IMR-90 (cell line): ENCODE measurements at regions of chr3 and their contacts with region 1.

Region 1: DNA sequence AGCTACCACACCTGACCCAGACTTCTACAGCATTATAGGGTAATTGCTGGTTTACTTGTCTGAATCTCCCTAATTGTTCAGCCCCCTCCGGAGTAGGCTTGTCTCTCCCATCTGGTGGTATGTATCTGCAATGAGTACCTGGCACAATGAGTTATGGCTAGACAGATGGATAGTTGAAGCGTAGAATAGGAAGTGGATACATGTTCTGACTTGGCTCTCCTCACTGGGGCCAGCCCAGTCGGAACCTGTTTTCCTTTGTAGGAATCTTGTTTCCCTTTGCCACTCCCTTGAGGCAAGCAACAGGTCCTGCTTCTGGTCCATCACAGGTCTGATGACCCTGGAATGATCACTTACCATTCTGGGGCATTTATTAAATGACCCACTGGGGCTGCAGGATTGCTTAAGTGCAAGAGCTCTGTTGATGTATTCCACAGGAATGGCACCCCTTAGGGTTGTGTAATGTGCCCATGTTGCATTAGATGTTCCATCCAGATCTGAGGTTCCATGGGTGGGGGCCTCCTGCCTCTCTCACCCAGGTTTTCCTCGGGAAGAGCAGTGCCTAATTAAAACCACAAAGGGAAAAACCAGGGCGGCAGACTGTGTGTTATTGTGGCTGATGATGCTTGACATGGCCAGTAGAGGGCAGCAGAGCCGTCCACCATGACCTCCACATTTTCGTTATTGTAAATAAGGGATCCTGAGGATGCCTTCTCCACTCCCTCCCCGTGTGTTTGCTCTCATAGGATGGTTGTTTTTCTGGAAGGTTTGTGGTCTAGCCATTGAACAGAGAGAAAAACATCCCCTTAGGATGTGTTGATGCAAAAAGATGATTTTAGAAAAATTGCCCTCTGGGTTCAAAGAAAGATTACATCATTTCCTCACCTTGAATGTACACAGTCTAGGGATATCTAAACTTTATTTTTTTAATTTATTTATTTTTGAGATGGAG is 58.0 kb downstream of the CMTM8 start:
- DNase-seq: peak; percentile 55
- ATAC-seq: peak; percentile 96
- H3K4me3 ChIP-seq: no peak overlapping the region
- H3K27ac ChIP-seq: no peak overlapping the region
- H3K4me1 ChIP-seq: no peaks in the 10 kb centered on the region
- H3K27me3 ChIP-seq: peaks cover 2% of the 10 kb centered on the region; the same call in 1 of the 2 replicates
- CTCF ChIP-seq: peak; percentile 84
- POLR2A ChIP-seq: no peak
- RAD21 ChIP-seq: peak; percentile 76

Region 2: GRCh38 chr3:32177702-32178198 is 118.8 kb before region 1 on chr3:
- CTCF ChIA-PET with region 1: no interaction called
- POLR2A ChIA-PET with region 1: no interaction called
- dilution Hi-C with region 1: no loop called
- in situ Hi-C with region 1: no loop called
- intact Hi-C with region 1: loop called (anchors 1 kb)
- DNase-seq: peak; percentile 47
- ATAC-seq: peak; percentile 81
- H3K4me3 ChIP-seq: no peak overlapping the region
- H3K27ac ChIP-seq: no peak overlapping the region
- H3K4me1 ChIP-seq: no peaks in the 10 kb centered on the region
- H3K27me3 ChIP-seq: peaks cover 18% of the 10 kb centered on the region
- CTCF ChIP-seq: peak; percentile 47
- POLR2A ChIP-seq: no peak
- RAD21 ChIP-seq: peak; percentile 33; the same call in 1 of the 2 replicates

Region 3: DNA sequence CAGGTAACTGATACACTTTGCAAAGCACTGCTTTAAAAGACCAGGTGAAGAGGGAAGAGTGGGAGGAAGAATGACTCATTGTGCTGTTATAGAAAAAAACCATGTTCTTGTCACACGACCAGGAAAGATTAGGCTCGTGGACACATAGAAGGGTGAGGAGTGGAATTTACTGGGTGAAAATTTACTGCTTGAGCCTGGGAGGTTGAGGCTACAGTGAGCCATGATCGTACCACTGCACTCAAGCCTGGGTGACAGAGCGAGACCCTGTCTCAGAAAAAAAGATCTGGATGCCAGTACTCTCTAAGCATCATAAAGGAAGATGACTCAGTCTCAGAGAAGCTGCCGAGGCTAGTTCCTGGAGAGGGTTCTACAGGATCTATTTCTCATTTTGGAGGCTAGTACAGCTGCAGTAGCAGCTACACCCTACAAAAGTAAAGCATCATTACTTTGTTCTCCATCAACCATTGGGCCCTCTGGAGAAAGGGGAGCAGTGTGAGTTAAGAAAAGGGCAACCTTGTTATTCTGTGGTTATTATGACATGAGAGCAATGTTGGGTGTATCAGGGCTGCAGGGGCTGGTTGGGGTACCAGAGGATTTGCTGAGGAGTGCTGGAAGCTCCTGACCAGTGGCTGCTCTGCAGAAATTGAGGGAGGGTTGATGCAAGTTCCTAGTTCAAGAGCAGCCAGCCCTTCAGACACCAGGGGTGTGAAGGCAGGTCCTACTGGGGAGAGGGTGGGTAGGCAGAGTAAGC is 17.4 kb after region 1 on chr3:
- CTCF ChIA-PET with region 1: interaction called, 4 read pairs
- POLR2A ChIA-PET with region 1: interaction called, 10 read pairs
- dilution Hi-C with region 1: no loop called
- in situ Hi-C with region 1: no loop called
- intact Hi-C with region 1: no loop called
- DNase-seq: peak; percentile 3
- ATAC-seq: no peak
- H3K4me3 ChIP-seq: no peak overlapping the region
- H3K27ac ChIP-seq: no peak overlapping the region
- H3K4me1 ChIP-seq: no peaks in the 10 kb centered on the region
- H3K27me3 ChIP-seq: peaks cover 14% of the 10 kb centered on the region
- CTCF ChIP-seq: no peak
- POLR2A ChIP-seq: no peak
- RAD21 ChIP-seq: no peak

Region 4: DNA sequence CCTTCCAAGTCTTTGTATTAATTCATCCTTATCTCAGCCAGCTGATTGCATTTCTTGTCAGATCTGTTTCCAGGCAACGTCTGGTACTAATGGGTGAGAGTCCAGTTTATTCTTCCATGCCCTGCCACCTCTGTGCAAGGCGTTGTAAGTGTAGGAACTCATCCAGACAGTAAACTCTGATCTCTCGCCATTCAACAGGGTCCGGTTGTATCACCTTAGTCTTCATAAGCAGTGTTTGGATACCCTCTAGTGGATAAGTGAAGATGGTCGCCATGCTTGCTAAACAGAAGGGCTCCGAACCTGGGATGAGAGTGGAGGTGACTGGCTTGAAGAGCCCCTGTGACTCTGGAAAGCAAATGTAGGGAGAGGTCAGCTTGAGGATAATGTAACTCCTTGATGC is 43.5 kb after region 1 on chr3:
- CTCF ChIA-PET with region 1: no interaction called
- POLR2A ChIA-PET with region 1: no interaction called
- dilution Hi-C with region 1: no loop called
- in situ Hi-C with region 1: no loop called
- intact Hi-C with region 1: loop called (anchors 5 kb)
- DNase-seq: peak; percentile 35
- ATAC-seq: peak; percentile 62
- H3K4me3 ChIP-seq: no peak overlapping the region
- H3K27ac ChIP-seq: no peak overlapping the region
- H3K4me1 ChIP-seq: no peaks in the 10 kb centered on the region
- H3K27me3 ChIP-seq: peaks cover 13% of the 10 kb centered on the region
- CTCF ChIP-seq: peak; percentile 40
- POLR2A ChIP-seq: no peak
- RAD21 ChIP-seq: peak; percentile 57

Region 5: GRCh38 chr3:32467333-32468070 is 171.0 kb after region 1 on chr3:
- CTCF ChIA-PET with region 1: interaction called, 5 read pairs
- POLR2A ChIA-PET with region 1: no interaction called
- dilution Hi-C with region 1: no loop called
- in situ Hi-C with region 1: loop called (anchors 5 kb)
- intact Hi-C with region 1: loop called (anchors 1 kb)
- DNase-seq: peak; percentile 52
- ATAC-seq: peak; percentile 76
- H3K4me3 ChIP-seq: no peak overlapping the region
- H3K27ac ChIP-seq: no peak overlapping the region
- H3K4me1 ChIP-seq: peaks cover 11% of the 10 kb centered on the region
- H3K27me3 ChIP-seq: no peaks in the 10 kb centered on the region
- CTCF ChIP-seq: peak; percentile 92
- POLR2A ChIP-seq: no peak
- RAD21 ChIP-seq: peak; percentile 92

Region 6: GRCh38 chr3:32502118-32502945 is 205.8 kb after region 1 on chr3 and contains the start of gene CMTM6:
- CTCF ChIA-PET with region 1: no interaction called
- POLR2A ChIA-PET with region 1: no interaction called
- dilution Hi-C with region 1: no loop called
- in situ Hi-C with region 1: no loop called
- intact Hi-C with region 1: loop called (anchors 2 kb)
- DNase-seq: peak; percentile 80
- ATAC-seq: peak; percentile 88
- H3K4me3 ChIP-seq: peak within 1 kb of the TSS; percentile 59
- H3K27ac ChIP-seq: peak within 1 kb of the TSS; percentile 88
- H3K4me1 ChIP-seq: peaks cover 3% of the 10 kb centered on the region; the same call in 1 of the 2 replicates
- H3K27me3 ChIP-seq: no peaks in the 10 kb centered on the region
- CTCF ChIP-seq: no peak
- POLR2A ChIP-seq: peak; percentile 79; the same call in 1 of the 2 replicates
- RAD21 ChIP-seq: 0 out of 2 replicates have a peak, but pooled peaks have one; percentile 7
- total RNA-seq, gene CMTM6: 36.6 and 85.0 TPM in 2 replicates

Region 7: GRCh38 chr3:32667122-32667521 is 370.6 kb after region 1 on chr3:
- CTCF ChIA-PET with region 1: no interaction called
- POLR2A ChIA-PET with region 1: no interaction called
- dilution Hi-C with region 1: no loop called
- in situ Hi-C with region 1: loop called (anchors 25 kb)
- intact Hi-C with region 1: no loop called
- DNase-seq: no peak
- ATAC-seq: no peak
- H3K4me3 ChIP-seq: no peak overlapping the region
- H3K27ac ChIP-seq: no peak overlapping the region
- H3K4me1 ChIP-seq: no peaks in the 10 kb centered on the region
- H3K27me3 ChIP-seq: no peaks in the 10 kb centered on the region; the same call in 1 of the 2 replicates
- CTCF ChIP-seq: no peak
- POLR2A ChIP-seq: no peak
- RAD21 ChIP-seq: no peak